Activated CD4-positive, alpha-beta memory T cell treated with anti-CD3 and anti-CD28 coated beads for 36 hours (primary cell): ENCODE measurements at regions of chr1 and their contacts with region 1.

Region 1: DNA sequence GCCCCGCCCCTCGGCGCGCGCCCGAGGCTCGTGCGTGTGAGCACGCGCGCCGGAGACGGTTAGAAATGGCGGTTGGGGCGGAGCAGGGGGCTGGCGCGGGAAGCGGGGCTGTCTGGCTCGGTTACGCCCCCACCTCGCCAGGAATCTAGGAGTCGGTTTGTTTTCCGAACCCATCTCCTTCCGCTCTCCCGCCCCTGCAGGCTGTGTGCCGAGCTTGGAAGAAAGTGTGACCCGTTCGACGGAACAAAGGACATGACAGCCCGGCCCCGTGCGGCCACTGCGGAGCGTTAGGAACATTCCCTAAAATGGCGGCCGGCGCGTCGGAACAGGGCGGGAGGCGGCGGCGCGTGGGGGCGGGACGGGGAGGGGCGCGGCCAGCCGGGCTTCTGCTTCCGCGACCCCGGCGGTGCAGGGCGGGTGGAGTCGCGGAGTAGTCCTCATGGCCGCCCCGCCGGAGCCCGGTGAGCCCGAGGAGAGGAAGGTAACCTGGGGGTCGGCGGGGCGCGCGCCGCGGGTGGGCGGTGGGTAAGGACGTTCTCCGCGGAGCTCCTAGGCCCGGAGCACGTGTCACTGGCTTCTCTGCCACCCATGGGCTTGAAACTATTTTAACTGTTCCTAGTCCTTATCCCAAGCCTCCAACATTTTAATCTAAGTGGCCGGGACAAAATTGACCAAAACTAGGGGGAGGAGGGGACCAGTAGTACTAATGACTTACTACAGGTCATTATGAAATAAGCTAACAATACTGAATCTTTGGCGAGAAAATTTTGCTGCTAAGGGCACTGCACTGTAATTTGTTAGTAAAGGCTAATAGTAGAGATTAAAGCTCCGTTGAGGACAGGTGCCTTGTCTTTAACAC is at the start of gene COX20:
- DNase-seq: peak; percentile 89
- H3K4me3 Mint-ChIP-seq: peak within 1 kb of the TSS; percentile 94
- H3K27ac Mint-ChIP-seq: peak within 1 kb of the TSS; percentile 99
- H3K4me1 Mint-ChIP-seq: peaks cover 45% of the 10 kb centered on the region
- H3K27me3 Mint-ChIP-seq: no peaks in the 10 kb centered on the region
- total RNA-seq, gene COX20: 23.4 to 27.8 TPM

Region 2: DNA sequence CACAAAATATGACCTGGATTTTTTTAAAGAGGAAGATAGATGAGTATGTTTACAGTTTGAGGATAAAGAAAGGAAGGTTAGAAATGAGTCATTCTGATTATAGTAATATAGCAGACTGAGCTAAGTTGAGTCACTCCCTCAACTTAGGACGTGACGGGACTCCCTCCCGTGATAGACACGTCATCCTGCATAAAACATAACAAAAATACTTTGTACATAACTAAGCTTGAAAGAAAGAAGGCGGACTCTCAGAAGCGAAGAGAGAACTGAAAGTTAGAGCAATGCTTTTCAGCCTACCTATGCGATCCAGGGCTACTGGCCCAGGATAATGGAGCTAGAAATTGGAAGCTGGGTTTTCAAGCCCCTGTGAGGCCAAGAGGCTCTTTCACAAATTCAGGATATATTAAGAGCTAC is 235.6 kb before region 1 on chr1:
- CTCF ChIA-PET with region 1: interaction called, 3 read pairs
- POLR2A ChIA-PET with region 1: interaction called, 8 read pairs
- intact Hi-C with region 1: loop called (anchors 1 kb)
- DNase-seq: peak; percentile 76
- H3K4me3 Mint-ChIP-seq: peak overlapping the region; percentile 70
- H3K27ac Mint-ChIP-seq: peak overlapping the region; percentile 88
- H3K4me1 Mint-ChIP-seq: peaks cover 24% of the 10 kb centered on the region
- H3K27me3 Mint-ChIP-seq: peaks cover 4% of the 10 kb centered on the region

Region 3: DNA sequence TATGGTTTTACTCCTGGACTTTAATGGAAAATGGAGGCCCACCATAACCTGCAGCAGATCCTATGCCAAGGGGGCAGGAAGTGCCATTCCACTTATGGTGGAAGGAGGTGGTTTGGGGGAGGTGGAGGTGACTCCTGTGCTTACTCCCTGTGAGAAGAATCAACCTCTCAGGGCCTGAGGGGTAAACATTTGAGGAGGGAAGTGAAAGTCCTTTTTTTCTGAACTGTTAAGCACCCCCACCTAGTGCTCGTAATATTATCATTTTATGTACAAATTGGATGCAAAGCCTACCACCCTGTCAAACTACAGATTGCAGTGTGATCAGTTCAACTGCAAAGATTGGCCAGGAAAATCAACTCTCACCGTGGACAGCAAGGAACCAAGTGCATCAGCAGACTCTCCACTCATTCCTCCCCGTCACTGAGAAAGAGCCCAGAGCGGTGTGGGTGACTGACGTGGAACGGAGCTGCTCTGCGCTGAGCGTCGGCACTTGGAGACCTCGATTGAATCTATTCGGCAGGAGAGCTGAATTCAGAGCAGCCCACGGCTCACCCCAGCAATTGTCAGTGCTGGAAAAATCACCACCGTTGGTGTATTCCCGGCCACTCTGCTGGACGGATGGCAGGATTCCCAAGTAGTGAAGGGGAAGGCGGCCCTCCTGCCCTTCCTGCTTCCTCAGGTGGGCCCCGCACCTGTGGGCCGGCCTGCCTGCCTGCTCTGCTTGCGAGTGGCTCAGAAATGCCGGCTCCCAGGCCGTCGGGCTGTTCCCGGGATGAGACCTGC is 46.8 kb before region 1 on chr1:
- CTCF ChIA-PET with region 1: no interaction called
- POLR2A ChIA-PET with region 1: no interaction called
- intact Hi-C with region 1: no loop called
- DNase-seq: no peak
- H3K4me3 Mint-ChIP-seq: no peak overlapping the region
- H3K27ac Mint-ChIP-seq: no peak overlapping the region
- H3K4me1 Mint-ChIP-seq: no peaks in the 10 kb centered on the region
- H3K27me3 Mint-ChIP-seq: peaks cover 2% of the 10 kb centered on the region

Region 4: DNA sequence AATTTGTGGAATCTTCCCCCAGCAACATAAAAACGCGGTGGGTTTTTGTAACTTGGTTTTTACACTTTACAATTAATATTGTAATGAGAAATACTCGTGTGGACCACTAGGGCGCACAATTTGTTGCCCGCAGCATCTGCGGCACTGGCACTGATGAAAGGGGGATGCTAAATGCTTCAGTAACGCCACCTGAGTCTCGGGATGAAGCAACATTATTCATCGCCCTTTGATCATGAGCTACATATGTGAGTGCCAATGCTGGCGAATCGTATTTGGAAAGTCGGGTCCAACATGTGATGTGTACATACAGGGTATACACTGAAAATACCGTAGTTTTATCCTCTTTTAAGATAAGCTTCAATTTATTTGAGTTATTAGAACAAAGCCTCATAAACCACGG is 34.3 kb before region 1 on chr1:
- CTCF ChIA-PET with region 1: interaction called, 25 read pairs
- POLR2A ChIA-PET with region 1: interaction called, 5 read pairs
- intact Hi-C with region 1: loop called (anchors 1 kb)
- DNase-seq: peak; percentile 66
- H3K4me3 Mint-ChIP-seq: no peak overlapping the region
- H3K27ac Mint-ChIP-seq: no peak overlapping the region
- H3K4me1 Mint-ChIP-seq: peaks cover 2% of the 10 kb centered on the region
- H3K27me3 Mint-ChIP-seq: peaks cover 2% of the 10 kb centered on the region

Region 5: GRCh38 chr1:244854865-244855578 is 19.5 kb after region 1 on chr1:
- CTCF ChIA-PET with region 1: interaction called, 11 read pairs
- POLR2A ChIA-PET with region 1: interaction called, 219 read pairs
- intact Hi-C with region 1: no loop called
- DNase-seq: no peak
- H3K4me3 Mint-ChIP-seq: peak overlapping the region; percentile 27
- H3K27ac Mint-ChIP-seq: peak overlapping the region; percentile 80
- H3K4me1 Mint-ChIP-seq: peaks cover 89% of the 10 kb centered on the region
- H3K27me3 Mint-ChIP-seq: no peaks in the 10 kb centered on the region

Region 6: GRCh38 chr1:244970661-244971551 is 135.4 kb after region 1 on chr1:
- CTCF ChIA-PET with region 1: interaction called, 5 read pairs
- POLR2A ChIA-PET with region 1: interaction called, 33 read pairs
- intact Hi-C with region 1: loop called (anchors 1 kb)
- DNase-seq: peak; percentile 93
- H3K4me3 Mint-ChIP-seq: peak overlapping the region; percentile 89
- H3K27ac Mint-ChIP-seq: peak overlapping the region; percentile 98
- H3K4me1 Mint-ChIP-seq: peaks cover 18% of the 10 kb centered on the region
- H3K27me3 Mint-ChIP-seq: no peaks in the 10 kb centered on the region